Aorta (tissue), 5 donors: ENCODE measurements at regions of chr1 and their contacts with region 1.

Region 1: DNA sequence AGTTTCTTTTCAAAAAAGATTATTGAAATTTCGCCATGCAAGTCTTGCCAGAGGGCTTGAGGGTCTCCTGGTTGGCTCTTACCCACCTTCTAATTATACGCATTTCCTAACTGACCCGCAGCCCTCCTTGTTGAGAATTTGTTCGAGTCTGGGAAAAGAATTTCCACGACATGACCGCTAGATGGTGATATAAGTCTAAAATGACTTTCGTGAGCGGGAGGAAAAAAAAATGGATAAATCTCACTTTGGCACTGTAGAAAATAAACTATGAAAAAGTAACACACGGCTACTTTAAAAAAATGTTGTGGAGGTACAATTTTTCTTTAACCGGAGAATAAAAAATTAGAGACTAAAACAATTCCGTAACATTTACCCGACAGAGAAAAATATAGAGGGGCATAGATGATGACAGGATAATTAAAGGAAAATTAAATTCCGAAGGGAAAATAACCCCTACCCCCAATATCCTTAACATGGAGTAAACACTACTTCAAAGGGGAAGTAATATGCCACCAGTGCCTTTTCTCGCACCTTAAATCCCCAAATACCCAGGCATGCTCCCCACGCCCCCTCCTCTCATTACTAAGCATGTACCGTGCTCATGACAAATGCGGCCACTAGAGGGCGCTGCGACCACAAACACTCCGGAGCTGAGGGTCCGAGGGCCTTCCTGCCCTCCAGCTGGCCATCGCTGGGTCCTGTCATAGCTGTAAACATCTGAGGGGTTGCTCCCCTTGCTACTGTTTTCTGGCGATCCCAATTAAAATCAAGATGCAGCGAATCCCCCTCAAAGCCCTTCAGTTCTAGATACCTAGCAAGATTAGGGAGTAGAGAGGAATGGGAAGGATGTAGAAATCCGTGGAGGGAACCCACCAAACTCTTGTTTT is 266.9 kb downstream of the ASTN1 start:
- DNase-seq: peak in 1 of 2 donors; percentile 88
- ATAC-seq: peak; percentile 75
- H3K4me3 ChIP-seq: peak overlapping the region in 1 of 2 donors; percentile 4
- H3K27ac ChIP-seq: no peak overlapping the region
- H3K4me1 ChIP-seq: no peaks in the 10 kb centered on the region
- H3K27me3 ChIP-seq: no peaks in the 10 kb centered on the region

Region 2: GRCh38 chr1:176701151-176701866 is 196.3 kb before region 1 on chr1:
- intact Hi-C with region 1: no loop called
- DNase-seq: no peak
- ATAC-seq: no peak
- H3K4me3 ChIP-seq: no peak overlapping the region
- H3K27ac ChIP-seq: no peak overlapping the region
- H3K4me1 ChIP-seq: no peaks in the 10 kb centered on the region
- H3K27me3 ChIP-seq: no peaks in the 10 kb centered on the region

Region 3: GRCh38 chr1:176949033-176949662 is 51.6 kb after region 1 on chr1:
- intact Hi-C with region 1: loop called (anchors 5 kb)
- DNase-seq: peak; percentile 59 to 83
- ATAC-seq: no peak
- H3K4me3 ChIP-seq: no peak overlapping the region
- H3K27ac ChIP-seq: no peak overlapping the region
- H3K4me1 ChIP-seq: no peaks in the 10 kb centered on the region
- H3K27me3 ChIP-seq: no peaks in the 10 kb centered on the region

Region 4: GRCh38 chr1:176954242-176954641 is 56.6 kb after region 1 on chr1:
- intact Hi-C with region 1: loop called (anchors 5 kb)
- DNase-seq: no peak
- ATAC-seq: no peak
- H3K4me3 ChIP-seq: no peak overlapping the region
- H3K27ac ChIP-seq: no peak overlapping the region
- H3K4me1 ChIP-seq: no peaks in the 10 kb centered on the region
- H3K27me3 ChIP-seq: peaks cover 0 to 2% of the 10 kb centered on the region in 2 donors

Region 5: DNA sequence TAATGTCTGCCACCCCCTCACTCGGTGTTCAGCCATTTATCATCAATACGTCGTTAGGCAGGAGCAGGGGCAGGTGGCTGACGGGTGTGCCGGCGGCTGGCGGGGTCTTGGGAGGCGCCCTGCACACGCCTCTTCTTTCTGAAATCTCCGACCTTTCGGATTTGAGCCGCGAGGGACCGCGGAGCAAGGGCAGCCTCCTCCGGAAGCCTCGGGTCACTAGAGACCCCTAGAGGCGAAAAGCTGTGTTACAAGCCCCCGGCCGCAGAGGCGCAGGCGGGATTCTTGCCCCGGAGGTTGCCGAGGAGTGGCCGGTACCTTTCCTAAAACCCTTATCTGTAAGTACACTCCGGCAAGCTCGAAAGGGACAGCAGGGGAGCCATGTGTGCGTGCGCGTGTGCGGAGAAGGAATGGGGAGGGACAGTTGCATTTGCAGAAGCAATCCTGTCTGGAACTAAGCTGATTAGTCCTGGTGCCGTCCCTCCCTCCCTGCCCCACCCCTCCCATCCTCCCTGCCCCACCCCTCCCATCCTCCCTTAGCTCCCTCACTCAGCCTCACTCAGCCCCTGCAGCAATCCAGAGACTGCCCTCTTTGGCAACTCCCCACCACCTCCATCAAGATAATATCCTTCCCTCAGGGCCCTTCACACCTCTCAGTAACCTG is 284.2 kb after region 1 on chr1:
- intact Hi-C with region 1: loop called (anchors 2 kb)
- DNase-seq: peak; percentile 61 to 85
- ATAC-seq: peak; percentile 80
- H3K4me3 ChIP-seq: no peak overlapping the region
- H3K27ac ChIP-seq: no peak overlapping the region
- H3K4me1 ChIP-seq: no peaks in the 10 kb centered on the region
- H3K27me3 ChIP-seq: no peaks in the 10 kb centered on the region

Region 6: DNA sequence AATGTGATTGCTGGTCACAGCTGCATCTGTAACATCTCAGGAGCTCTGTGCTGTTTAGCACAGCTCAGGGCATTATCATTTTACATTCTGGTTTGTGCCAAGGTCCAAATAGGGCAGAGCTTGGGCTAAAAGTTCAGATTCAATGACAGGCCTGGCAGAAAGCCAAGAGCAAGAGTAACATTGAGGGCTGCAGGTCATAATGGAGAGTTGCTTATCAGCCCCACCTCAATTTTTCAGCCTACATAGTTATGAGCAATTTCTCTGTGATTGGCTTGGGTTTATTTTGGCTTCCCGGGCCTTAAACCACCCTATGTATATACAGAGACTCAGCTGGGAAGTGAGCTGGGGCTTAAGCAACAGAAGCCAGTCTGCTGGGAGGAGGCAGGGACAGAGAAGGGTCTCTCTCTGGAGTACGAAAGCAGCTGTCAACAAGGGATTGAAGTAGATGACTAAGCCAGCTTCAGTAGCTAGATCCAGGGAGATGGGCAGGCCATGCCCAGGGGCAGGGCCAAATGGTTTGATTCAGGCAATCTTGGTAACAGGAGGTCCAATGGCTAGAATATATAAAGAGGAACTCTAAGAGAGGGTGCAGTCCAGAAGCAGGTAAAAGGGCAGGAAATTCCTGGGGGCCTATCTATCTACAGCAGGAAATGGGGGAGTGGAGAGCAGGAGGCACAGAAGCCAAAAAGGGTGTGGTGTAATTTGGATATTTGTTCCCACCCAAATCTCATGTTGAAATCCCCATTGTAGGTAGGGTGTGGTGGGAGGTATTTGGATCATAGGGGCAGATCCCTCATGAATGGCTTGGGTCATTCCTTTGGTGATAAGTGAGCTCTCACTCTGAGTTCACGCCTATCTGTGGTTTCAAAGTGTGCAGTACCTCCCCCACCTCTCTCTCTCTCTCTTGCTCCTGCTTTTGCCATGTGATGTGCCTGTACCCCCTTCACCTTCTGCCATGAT is 322.2 kb after region 1 on chr1:
- intact Hi-C with region 1: no loop called
- DNase-seq: no peak
- ATAC-seq: no peak
- H3K4me3 ChIP-seq: no peak overlapping the region
- H3K27ac ChIP-seq: no peak overlapping the region
- H3K4me1 ChIP-seq: no peaks in the 10 kb centered on the region
- H3K27me3 ChIP-seq: peaks cover 0 to 4% of the 10 kb centered on the region in 2 donors

Region 7: GRCh38 chr1:177355595-177355994 is 458.0 kb after region 1 on chr1:
- intact Hi-C with region 1: loop called in 1 of 2 experiments (anchors 10 kb)
- DNase-seq: no peak
- ATAC-seq: no peak
- H3K4me3 ChIP-seq: no peak overlapping the region
- H3K27ac ChIP-seq: no peak overlapping the region
- H3K4me1 ChIP-seq: no peaks in the 10 kb centered on the region
- H3K27me3 ChIP-seq: no peaks in the 10 kb centered on the region

Region 8: GRCh38 chr1:177780096-177780700 is 882.6 kb after region 1 on chr1:
- intact Hi-C with region 1: loop called (anchors 5 to 10 kb)
- DNase-seq: no peak
- ATAC-seq: no peak
- H3K4me3 ChIP-seq: no peak overlapping the region
- H3K27ac ChIP-seq: no peak overlapping the region
- H3K4me1 ChIP-seq: no peaks in the 10 kb centered on the region
- H3K27me3 ChIP-seq: no peaks in the 10 kb centered on the region

Region 9: GRCh38 chr1:177948336-177948972 is 1050.9 kb after region 1 on chr1:
- intact Hi-C with region 1: loop called (anchors 5 kb)
- DNase-seq: no peak
- ATAC-seq: peak; percentile 76
- H3K4me3 ChIP-seq: no peak overlapping the region
- H3K27ac ChIP-seq: no peak overlapping the region
- H3K4me1 ChIP-seq: no peaks in the 10 kb centered on the region
- H3K27me3 ChIP-seq: no peaks in the 10 kb centered on the region